ENCODE measurements at regions of chr2 and their contacts with region 1.

Region 1: GRCh38 chr2:105235388-105236054 is 6.0 kb upstream of the GPR45 start:
- DNase-seq: peak; percentile 78 to 87
- ATAC-seq: no peak
- H3K4me3 ChIP-seq: no peak overlapping the region
- H3K27ac ChIP-seq: no peak overlapping the region
- H3K4me1 ChIP-seq: no peaks in the 10 kb centered on the region
- H3K27me3 ChIP-seq: no peaks in the 10 kb centered on the region

Region 2: GRCh38 chr2:105114551-105114950 is 121.0 kb before region 1 on chr2:
- intact Hi-C with region 1: loop called (anchors 2 to 5 kb)
- DNase-seq: no peak
- ATAC-seq: no peak
- H3K4me3 ChIP-seq: no peak overlapping the region
- H3K27ac ChIP-seq: no peak overlapping the region
- H3K4me1 ChIP-seq: no peaks in the 10 kb centered on the region
- H3K27me3 ChIP-seq: no peaks in the 10 kb centered on the region